Transverse colon (tissue), 4 donors: ENCODE measurements at regions of chr19 and their contacts with region 1.

Region 1: DNA sequence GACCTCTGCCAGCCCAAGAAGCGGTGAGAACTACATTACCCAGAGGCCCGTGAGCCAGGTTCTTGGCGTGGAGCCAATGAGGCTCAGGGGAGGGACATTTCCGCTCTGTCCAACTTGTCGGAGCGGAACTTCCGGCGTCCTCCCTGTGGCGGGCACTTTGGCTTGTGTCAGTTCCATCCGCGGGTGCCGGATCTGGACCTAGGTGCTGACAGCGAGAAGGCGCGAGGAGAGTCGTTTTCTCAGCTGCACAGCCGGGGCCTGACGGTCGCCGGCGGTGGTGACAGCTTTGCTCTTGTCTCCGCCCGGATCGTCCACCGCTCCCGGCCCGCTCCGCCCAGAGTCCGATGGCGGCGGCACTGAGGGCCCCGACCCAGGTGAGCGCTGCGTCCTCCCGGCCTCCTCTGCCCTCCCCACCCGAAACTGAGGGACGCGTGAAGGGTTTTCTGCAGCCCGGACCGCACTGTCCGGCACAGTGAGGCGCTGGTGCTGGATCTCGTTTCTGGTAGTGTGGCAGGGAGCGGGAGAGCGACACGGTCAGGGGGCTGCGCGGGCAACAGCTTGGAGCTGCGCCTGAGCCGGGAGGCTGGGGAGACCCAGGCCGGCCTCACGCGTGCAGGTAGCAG is at the start of gene ZNF530:
- DNase-seq: peak; percentile 94
- H3K4me3 ChIP-seq: peak within 1 kb of the TSS; percentile 38 to 74 (median 57)
- H3K27ac ChIP-seq: peak within 1 kb of the TSS in 3 of 4 donors; percentile 30 to 34 (median 32)
- H3K4me1 ChIP-seq: peaks cover 4 to 13% (median 9%) of the 10 kb centered on the region in 4 donors
- H3K27me3 ChIP-seq: no peaks in the 10 kb centered on the region
- CTCF ChIP-seq: no peak
- EP300 ChIP-seq: no peak
- POLR2A ChIP-seq: no peak
- total RNA-seq, gene ZNF530: 2.4 to 4.4 TPM in 2 of 4 donors, not detected in the others

Region 2: DNA sequence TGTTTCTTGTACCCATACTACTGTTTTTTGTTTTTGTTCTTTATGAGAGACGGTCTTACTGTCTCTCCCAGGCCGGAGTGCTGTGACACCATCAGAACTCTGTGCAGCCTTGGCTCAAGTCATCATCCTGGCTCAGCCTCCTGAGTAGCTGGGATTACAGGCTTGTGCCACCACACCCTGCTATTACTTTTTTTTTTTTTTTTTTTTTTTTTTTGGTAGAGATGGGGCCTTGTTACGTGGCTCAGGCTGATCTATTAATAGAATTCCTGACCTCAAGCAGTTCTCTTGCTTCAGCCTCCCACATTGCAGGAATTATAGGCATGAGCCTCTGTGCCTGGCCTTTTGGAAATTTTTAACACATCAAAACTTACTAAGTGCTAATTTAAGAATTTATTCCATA is 251.7 kb before region 1 on chr19:
- in situ Hi-C with region 1: no loop called
- intact Hi-C with region 1: loop called (anchors 10 kb)
- DNase-seq: no peak
- H3K4me3 ChIP-seq: no peak overlapping the region
- H3K27ac ChIP-seq: no peak overlapping the region
- H3K4me1 ChIP-seq: peaks cover 8 to 19% (median 12%) of the 10 kb centered on the region in 4 donors
- H3K27me3 ChIP-seq: no peaks in the 10 kb centered on the region
- CTCF ChIP-seq: no peak
- EP300 ChIP-seq: no peak
- POLR2A ChIP-seq: no peak

Region 3: DNA sequence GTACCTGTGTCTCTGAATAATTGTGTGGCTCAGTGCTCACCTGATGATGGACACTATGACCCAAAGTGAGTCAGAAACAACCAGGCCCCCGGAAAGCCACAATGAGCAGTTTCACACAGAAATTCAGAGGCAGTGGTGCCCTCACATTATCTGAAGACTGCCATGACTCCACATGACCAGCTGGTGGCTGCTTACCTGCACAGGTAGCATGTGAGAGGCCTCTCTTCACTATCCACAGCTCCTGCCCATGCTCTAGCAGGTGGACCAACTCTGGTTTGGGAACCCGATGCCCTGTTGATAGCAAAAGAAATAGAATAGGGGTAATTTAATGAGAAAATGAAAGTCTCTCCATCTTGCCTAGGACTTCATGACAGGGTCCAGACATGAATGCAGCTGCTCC is 47.4 kb before region 1 on chr19:
- in situ Hi-C with region 1: no loop called
- intact Hi-C with region 1: no loop called
- DNase-seq: no peak
- H3K4me3 ChIP-seq: no peak overlapping the region
- H3K27ac ChIP-seq: no peak overlapping the region
- H3K4me1 ChIP-seq: no peaks in the 10 kb centered on the region
- H3K27me3 ChIP-seq: no peaks in the 10 kb centered on the region
- CTCF ChIP-seq: no peak
- EP300 ChIP-seq: no peak
- POLR2A ChIP-seq: no peak

Region 4: DNA sequence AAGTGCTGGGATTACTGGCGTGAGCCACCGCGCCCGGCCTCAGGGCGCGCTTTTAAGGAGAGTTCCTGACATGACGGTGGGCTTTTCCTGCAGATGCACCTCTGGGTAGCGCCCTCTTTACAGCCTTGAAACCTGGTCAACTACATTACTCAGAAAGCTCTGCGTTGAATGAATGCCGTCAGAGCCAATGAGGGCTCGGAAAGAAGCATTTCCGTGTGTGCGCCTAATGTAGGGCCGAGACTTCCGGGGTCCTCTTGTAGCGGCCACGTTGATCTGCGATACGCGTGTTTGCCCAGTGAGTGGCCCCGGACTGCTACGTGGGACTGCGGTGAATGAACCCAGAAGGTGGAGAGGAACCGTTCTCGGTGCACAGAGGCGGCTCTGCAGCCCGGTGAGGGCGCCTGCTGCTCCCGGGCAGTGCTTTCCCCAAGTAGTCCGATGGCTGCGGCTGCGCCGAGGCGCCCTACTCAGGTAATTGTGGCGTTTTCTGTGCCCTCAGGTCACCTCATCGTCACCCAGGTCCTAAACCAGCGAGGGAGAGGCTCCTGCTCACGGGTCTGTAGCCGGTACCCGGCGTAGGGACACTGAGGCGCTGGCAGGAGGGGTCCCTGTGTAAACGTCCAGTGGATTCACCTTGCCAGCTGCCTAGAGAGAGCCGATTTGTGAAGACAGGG is 219.7 kb after region 1 on chr19:
- in situ Hi-C with region 1: no loop called
- intact Hi-C with region 1: no loop called
- DNase-seq: peak; percentile 89
- H3K4me3 ChIP-seq: peak overlapping the region; percentile 65 to 93 (median 84)
- H3K27ac ChIP-seq: peak overlapping the region; percentile 87 to 95 (median 92)
- H3K4me1 ChIP-seq: peaks cover 11 to 43% (median 40%) of the 10 kb centered on the region in 4 donors
- H3K27me3 ChIP-seq: no peaks in the 10 kb centered on the region
- CTCF ChIP-seq: peak in 1 of 5 experiments; percentile 14
- EP300 ChIP-seq: no peak
- POLR2A ChIP-seq: peak; percentile 75